Activated CD8-positive, alpha-beta memory T cell treated with anti-CD3 and anti-CD28 coated beads, Interleukin-2, amount 10 ng/mL, durations not matched to agents 7 days and 5 days (primary cell): ENCODE measurements at regions of chr2 and their contacts with region 1.

Region 1: GRCh38 chr2:156332534-156333273 is at the start of gene NR4A2:
- DNase-seq: peak; percentile 91
- ATAC-seq: peak; percentile 70
- H3K4me3 Mint-ChIP-seq: peak within 1 kb of the TSS; percentile 89
- H3K27ac Mint-ChIP-seq: peak within 1 kb of the TSS; percentile 91
- H3K4me1 Mint-ChIP-seq: peaks cover 33% of the 10 kb centered on the region
- H3K27me3 Mint-ChIP-seq: peaks cover 29% of the 10 kb centered on the region
- total RNA-seq, gene NR4A2: 3.2 to 14.8 TPM

Region 2: GRCh38 chr2:156400706-156401678 is 68.3 kb after region 1 on chr2:
- CTCF ChIA-PET with region 1: interaction called, 18 read pairs
- DNase-seq: peak; percentile 83
- ATAC-seq: peak; percentile 79
- H3K4me3 Mint-ChIP-seq: peak overlapping the region; percentile 83
- H3K27ac Mint-ChIP-seq: peak overlapping the region; percentile 91
- H3K4me1 Mint-ChIP-seq: peaks cover 31% of the 10 kb centered on the region
- H3K27me3 Mint-ChIP-seq: no peaks in the 10 kb centered on the region